ENCODE measurements at regions of chr20 and their contacts with region 1.

Region 1: GRCh38 chr20:62808211-62808865 is 3.7 kb downstream of the OGFR start:
- H3K4me3 ChIP-seq: no peak overlapping the region
- H3K27ac ChIP-seq: no peak overlapping the region
- H3K4me1 ChIP-seq: no peaks in the 10 kb centered on the region
- CTCF ChIP-seq: peak; percentile 65

Region 2: GRCh38 chr20:62822788-62823651 is 14.7 kb after region 1 on chr20:
- CTCF ChIA-PET with region 1: interaction called, 15 read pairs
- POLR2A ChIA-PET with region 1: interaction called, 4 read pairs
- H3K4me3 ChIP-seq: no peak overlapping the region
- H3K27ac ChIP-seq: no peak overlapping the region
- H3K4me1 ChIP-seq: peaks cover 4% of the 10 kb centered on the region; the same call in 1 of the 2 replicates
- CTCF ChIP-seq: peak; percentile 95